ENCODE measurements at regions of chr2 and their contacts with region 1.

Region 1: DNA sequence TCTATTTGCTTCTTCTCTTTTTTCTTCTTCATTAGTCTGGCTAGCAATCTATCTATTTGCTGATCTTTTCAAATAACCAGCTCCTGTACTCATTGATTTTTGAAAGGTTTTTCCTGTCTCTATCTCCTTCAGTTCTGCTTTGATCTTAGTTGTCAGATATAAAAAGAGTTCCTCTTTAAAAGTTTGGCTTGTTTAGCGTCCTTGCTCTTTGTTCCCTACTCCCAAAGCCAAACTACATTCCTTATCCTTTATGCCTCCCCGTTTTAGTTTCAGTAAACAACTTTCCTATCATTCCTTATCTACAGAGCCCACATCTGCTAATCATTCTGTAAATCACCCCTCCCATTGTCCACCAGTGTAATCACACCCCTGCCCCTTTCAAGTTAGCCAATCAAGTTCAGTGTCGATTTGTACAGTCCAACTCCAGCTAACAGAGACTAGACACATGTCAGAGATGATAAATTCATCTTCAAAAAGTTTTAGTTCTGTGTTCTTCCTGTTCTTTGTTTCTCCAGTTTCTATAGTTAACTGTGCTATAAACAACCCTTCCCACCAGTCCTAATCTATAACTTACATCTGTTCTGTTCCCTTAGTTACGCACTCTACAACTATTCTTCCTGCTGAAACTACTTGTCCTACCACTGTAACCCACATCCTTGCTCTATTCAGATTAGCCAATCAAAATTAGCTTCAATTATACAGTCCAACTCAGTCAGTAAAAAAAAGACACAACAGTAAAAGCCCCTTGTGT is 44.4 kb downstream of the TFPI start:
- DNase-seq: peak; percentile 27 to 53 (median 38)
- ATAC-seq: peak; percentile 70
- H3K4me3 ChIP-seq: no peak overlapping the region
- H3K27ac ChIP-seq: peak overlapping the region; percentile 4; the same call in 1 of the 3 replicates
- H3K4me1 ChIP-seq: peaks cover 0 to 5% of the 10 kb centered on the region in 2 experiments; a peak in 2 of 5 replicates
- H3K27me3 ChIP-seq: no peaks in the 10 kb centered on the region
- CTCF ChIP-seq: no peak
- EP300 ChIP-seq: no peak; the same call in 1 of the 2 replicates
- POLR2A ChIP-seq: no peak
- RAD21 ChIP-seq: no peak

Region 2: DNA sequence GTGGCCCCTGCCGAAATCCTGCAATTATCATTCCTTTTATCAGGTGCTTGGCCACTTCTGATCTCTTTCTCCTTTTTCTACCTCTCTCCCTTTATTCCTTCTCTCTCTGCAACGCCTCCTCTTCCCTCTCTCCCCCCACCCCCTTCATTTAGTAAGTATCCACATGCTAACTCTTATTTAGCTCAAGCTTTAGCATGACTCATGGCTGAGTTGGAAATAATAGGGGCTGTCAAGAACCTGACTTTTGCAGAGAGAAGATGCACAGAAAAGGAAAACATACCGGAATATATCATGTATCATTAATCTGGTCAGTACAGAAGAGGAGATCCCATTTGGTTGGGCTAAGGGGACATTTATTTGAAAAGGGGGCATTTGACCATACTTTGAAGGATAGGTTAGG is 782.9 kb before region 1 on chr2:
- CTCF ChIA-PET with region 1: no interaction called
- POLR2A ChIA-PET with region 1: no interaction called
- in situ Hi-C with region 1: no loop called
- intact Hi-C with region 1: no loop called
- DNase-seq: no peak
- ATAC-seq: no peak
- H3K4me3 ChIP-seq: no peak overlapping the region
- H3K27ac ChIP-seq: no peak overlapping the region
- H3K4me1 ChIP-seq: no peaks in the 10 kb centered on the region
- H3K27me3 ChIP-seq: no peaks in the 10 kb centered on the region; a peak in 1 of 5 replicates
- CTCF ChIP-seq: no peak
- EP300 ChIP-seq: no peak
- POLR2A ChIP-seq: no peak
- RAD21 ChIP-seq: no peak

Region 3: GRCh38 chr2:187547353-187547979 is 37.6 kb after region 1 on chr2:
- CTCF ChIA-PET with region 1: no interaction called
- POLR2A ChIA-PET with region 1: interaction called, 3 read pairs
- in situ Hi-C with region 1: no loop called
- intact Hi-C with region 1: loop called (anchors 5 kb)
- DNase-seq: peak; percentile 54 to 89 (median 67)
- ATAC-seq: peak; percentile 86
- H3K4me3 ChIP-seq: no peak overlapping the region
- H3K27ac ChIP-seq: peak overlapping the region; percentile 57
- H3K4me1 ChIP-seq: peaks cover 0 to 20% of the 10 kb centered on the region in 2 experiments; a peak in 3 of 5 replicates
- H3K27me3 ChIP-seq: no peaks in the 10 kb centered on the region
- CTCF ChIP-seq: no peak
- EP300 ChIP-seq: peak; percentile 65; the same call in 1 of the 2 replicates
- POLR2A ChIP-seq: no peak
- RAD21 ChIP-seq: no peak

Measured in K562 (cell line).